ENCODE measurements at regions of chr14 and their contacts with region 1.

Region 1: GRCh38 chr14:22836301-22837113 is at the start of gene MMP14:
- DNase-seq: peak; percentile 78
- H3K4me3 Mint-ChIP-seq: peak within 1 kb of the TSS; percentile 99
- H3K27ac Mint-ChIP-seq: peak within 1 kb of the TSS; percentile 98
- H3K4me1 Mint-ChIP-seq: peaks cover 21% of the 10 kb centered on the region
- H3K27me3 Mint-ChIP-seq: no peaks in the 10 kb centered on the region
- CTCF ChIP-seq: no peak
- total RNA-seq, gene MMP14: 71.5 and 78.6 TPM in 2 replicates

Region 2: GRCh38 chr14:22598099-22598899 is 238.2 kb before region 1 on chr14 and contains the start of gene ABHD4:
- CTCF ChIA-PET with region 1: interaction called, 5 read pairs
- POLR2A ChIA-PET with region 1: interaction called, 10 read pairs
- intact Hi-C with region 1: no loop called
- DNase-seq: peak; percentile 60
- H3K4me3 Mint-ChIP-seq: peak within 1 kb of the TSS; percentile 97
- H3K27ac Mint-ChIP-seq: peak within 1 kb of the TSS; percentile 88
- H3K4me1 Mint-ChIP-seq: peaks cover 15% of the 10 kb centered on the region
- H3K27me3 Mint-ChIP-seq: peaks cover 26% of the 10 kb centered on the region
- CTCF ChIP-seq: no peak
- total RNA-seq, gene ABHD4: 10.3 and 16.7 TPM in 2 replicates

Region 3: GRCh38 chr14:22822571-22823098 is 13.9 kb before region 1 on chr14:
- CTCF ChIA-PET with region 1: interaction called, 103 read pairs
- POLR2A ChIA-PET with region 1: interaction called, 69 read pairs
- intact Hi-C with region 1: no loop called
- DNase-seq: peak; percentile 85
- H3K4me3 Mint-ChIP-seq: peak overlapping the region; percentile 29
- H3K27ac Mint-ChIP-seq: no peak overlapping the region
- H3K4me1 Mint-ChIP-seq: peaks cover 18% of the 10 kb centered on the region
- H3K27me3 Mint-ChIP-seq: no peaks in the 10 kb centered on the region
- CTCF ChIP-seq: peak; percentile 86

Region 4: DNA sequence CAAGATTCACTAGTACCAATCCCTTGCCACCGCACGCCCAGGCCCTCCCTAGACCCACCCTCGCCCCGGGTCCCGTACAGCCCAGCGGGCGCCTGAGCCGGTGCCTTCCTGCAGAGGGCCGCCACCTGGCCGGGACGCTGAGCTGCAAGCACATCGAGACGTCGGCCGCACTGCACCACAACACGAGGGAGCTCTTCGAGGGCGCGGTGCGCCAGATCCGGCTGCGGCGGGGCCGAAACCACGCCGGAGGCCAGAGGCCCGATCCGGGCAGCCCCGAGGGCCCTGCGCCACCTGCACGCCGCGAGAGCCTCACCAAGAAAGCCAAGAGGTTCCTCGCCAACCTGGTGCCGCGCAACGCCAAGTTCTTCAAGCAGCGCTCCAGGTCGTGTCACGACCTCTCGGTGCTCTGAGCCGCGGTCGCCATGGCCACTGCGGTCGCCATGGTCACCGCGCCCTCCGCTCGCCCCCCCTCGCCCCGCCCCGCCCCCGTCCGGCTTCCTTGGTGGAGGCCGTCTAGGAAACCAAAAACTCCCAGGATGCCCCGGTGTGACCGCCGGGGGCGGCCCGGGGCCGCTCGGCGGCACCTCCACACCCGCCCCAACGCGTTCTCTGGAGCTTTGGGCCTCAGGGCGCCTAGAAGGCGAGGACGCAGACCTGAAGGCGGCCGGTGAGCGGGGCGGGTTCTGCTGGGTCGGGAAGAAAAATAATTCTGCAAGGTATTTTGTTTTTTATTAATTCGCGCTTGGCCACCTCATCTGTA is 50.2 kb after region 1 on chr14:
- CTCF ChIA-PET with region 1: interaction called, 3 read pairs
- POLR2A ChIA-PET with region 1: interaction called, 11 read pairs
- intact Hi-C with region 1: no loop called
- DNase-seq: peak; percentile 82
- H3K4me3 Mint-ChIP-seq: peak overlapping the region; percentile 95
- H3K27ac Mint-ChIP-seq: peak overlapping the region; percentile 90
- H3K4me1 Mint-ChIP-seq: peaks cover 25% of the 10 kb centered on the region
- H3K27me3 Mint-ChIP-seq: no peaks in the 10 kb centered on the region
- CTCF ChIP-seq: no peak

Region 5: DNA sequence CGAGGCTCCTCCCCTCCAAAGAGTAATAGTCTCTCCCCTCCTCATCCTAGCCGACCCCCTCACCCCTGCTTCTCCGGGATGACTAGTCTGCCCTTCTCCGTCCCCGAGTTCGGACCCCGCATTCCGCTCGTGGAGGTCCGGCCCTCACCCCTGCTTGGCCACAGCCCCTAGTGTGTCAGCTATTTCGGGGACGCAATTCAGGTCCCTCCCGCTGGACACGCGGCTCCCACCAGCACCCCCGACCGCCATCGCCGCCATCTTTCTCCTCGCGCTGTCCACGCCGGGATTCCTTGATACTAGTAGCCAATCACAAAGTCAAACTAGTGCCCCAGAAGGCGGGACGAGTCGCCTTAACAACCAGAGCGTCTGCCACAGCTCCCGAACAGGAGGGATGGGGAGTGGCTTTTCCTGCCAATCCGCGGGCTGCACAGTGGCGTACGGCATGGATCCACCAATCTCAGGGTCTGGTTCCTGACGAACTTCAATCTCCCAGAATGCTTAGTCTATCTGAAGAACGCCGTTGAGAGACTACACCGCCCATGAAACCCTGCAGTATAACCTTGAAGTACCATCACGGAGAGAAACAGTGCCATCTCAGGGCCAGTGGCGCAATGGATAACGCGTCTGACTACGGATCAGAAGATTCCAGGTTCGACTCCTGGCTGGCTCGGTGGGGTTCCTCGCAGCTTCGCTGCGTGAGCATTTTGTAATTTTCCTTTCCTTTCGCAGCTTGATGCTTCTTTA is 92.8 kb after region 1 on chr14 and contains the start of gene PRMT5:
- CTCF ChIA-PET with region 1: no interaction called
- POLR2A ChIA-PET with region 1: interaction called, 10 read pairs
- intact Hi-C with region 1: no loop called
- DNase-seq: peak; percentile 99
- H3K4me3 Mint-ChIP-seq: no peak within 1 kb of the TSS
- H3K27ac Mint-ChIP-seq: no peak within 1 kb of the TSS
- H3K4me1 Mint-ChIP-seq: peaks cover 15% of the 10 kb centered on the region
- H3K27me3 Mint-ChIP-seq: no peaks in the 10 kb centered on the region
- CTCF ChIP-seq: no peak
- total RNA-seq, gene PRMT5: 175 and 201 TPM in 2 replicates